ENCODE measurements at regions of chr17 and their contacts with region 1.

Region 1: GRCh38 chr17:44324571-44325275 is at the start of gene SLC25A39:
- DNase-seq: peak; percentile 99
- ATAC-seq: peak; percentile 74
- H3K4me3 Mint-ChIP-seq: peak within 1 kb of the TSS; percentile 91
- H3K27ac Mint-ChIP-seq: peak within 1 kb of the TSS; percentile 96
- H3K4me1 Mint-ChIP-seq: peaks cover 33% of the 10 kb centered on the region
- H3K27me3 Mint-ChIP-seq: no peaks in the 10 kb centered on the region
- CTCF ChIP-seq: no peak
- total RNA-seq, gene SLC25A39: 119 and 129 TPM in 2 replicates

Region 2: GRCh38 chr17:43917348-43918018 is 407.2 kb before region 1 on chr17:
- CTCF ChIA-PET with region 1: no interaction called
- POLR2A ChIA-PET with region 1: no interaction called
- intact Hi-C with region 1: no loop called
- DNase-seq: peak; percentile 49
- ATAC-seq: peak; percentile 72
- H3K4me3 Mint-ChIP-seq: peak overlapping the region; percentile 84
- H3K27ac Mint-ChIP-seq: peak overlapping the region; percentile 21
- H3K4me1 Mint-ChIP-seq: peaks cover 15% of the 10 kb centered on the region
- H3K27me3 Mint-ChIP-seq: no peaks in the 10 kb centered on the region
- CTCF ChIP-seq: no peak

Region 3: DNA sequence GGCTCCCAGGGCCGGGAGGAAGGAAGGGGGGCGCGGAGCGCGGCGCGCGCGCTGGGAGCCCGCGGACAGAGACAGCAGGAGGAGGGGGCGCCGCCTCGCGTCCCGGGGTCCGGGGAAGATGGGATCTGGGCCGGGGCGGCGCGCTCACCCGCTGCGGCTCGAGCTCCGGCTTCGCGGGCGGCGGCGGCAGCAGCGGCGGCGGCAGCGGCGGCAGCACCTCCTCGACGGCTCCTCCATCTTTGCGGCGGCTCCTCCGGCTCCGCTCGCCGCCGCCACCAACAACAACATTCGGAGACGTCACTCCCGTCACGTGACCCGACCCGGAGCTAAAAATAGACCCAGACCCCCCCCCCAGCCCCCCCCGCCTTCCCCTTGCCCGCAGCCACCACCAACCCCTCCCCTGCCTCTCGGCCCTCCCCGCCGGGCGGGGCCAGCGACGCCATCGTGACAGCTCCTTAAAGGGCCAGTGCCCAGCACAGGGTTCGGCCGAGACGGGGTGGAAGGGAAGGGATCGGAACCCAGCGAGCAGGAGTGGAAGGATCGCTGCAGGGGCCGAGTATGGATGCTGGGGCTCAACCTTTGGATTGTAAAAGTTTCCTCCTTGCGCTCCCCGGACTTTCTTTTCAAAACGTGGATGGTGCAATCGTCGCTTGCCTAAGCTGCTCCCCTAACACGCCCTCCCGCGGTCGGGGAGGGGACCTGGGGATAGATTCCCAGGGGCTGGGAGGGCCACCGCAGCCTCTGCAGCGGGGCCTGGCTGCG is 201.2 kb before region 1 on chr17 and contains the start of gene HDAC5:
- CTCF ChIA-PET with region 1: no interaction called
- POLR2A ChIA-PET with region 1: interaction called, 7 read pairs
- intact Hi-C with region 1: loop called (anchors 5 kb)
- DNase-seq: peak; percentile 95
- ATAC-seq: peak; percentile 96
- H3K4me3 Mint-ChIP-seq: peak within 1 kb of the TSS; percentile 95
- H3K27ac Mint-ChIP-seq: peak within 1 kb of the TSS; percentile 97
- H3K4me1 Mint-ChIP-seq: peaks cover 49% of the 10 kb centered on the region
- H3K27me3 Mint-ChIP-seq: no peaks in the 10 kb centered on the region
- CTCF ChIP-seq: no peak
- total RNA-seq, gene HDAC5: 28.4 and 35.1 TPM in 2 replicates

Region 4: DNA sequence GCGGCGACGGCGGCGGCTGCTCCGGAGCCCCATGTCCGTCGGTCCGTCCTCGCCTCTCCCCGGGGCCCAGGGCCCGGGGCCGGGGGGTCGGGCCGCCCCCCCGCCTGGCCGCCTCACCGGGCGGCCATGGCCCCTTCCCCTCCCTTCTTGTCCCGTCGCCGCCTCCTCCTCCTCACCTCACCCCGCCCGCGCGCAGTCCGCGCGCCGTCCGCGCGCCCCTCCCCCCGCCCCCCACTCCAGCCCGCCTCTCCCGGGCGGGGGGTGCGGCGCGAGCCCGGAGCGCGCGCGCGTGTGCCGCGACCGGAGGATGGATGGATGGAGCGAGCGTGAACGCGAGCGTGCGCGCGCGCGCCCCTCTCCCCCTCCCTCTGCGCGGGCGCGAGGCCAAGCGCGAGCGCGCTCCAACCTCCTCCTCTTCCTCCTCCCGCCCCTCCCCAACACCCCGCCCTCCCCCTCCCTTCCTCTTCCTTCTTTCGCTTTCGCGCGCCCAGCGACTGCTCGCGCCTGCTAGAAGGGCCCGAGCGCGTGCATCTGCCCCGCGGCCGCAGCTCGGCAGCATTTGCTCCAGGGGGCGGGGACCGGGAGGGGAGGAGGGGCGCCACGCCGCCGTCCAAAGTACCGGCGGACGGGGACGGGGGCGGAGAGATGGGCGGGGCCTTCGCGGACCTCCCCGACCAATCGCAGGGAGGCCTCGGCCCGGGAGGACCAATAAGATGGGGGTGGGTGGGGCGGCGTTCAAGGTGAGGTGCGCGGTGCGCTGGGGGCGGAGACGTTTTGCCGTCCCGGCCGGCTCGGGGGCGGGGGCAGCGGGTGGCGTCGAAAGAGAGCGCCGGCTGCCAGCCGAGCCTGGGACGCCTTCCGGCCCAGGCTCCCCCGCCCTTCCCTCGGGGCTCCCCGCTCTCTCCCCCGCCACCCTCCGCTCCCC is 124.9 kb before region 1 on chr17 and contains the start of gene ATXN7L3:
- CTCF ChIA-PET with region 1: no interaction called
- POLR2A ChIA-PET with region 1: interaction called, 14 read pairs
- intact Hi-C with region 1: loop called (anchors 1 kb)
- DNase-seq: peak; percentile 95
- ATAC-seq: peak; percentile 85
- H3K4me3 Mint-ChIP-seq: peak within 1 kb of the TSS; percentile 91
- H3K27ac Mint-ChIP-seq: peak within 1 kb of the TSS; percentile 92
- H3K4me1 Mint-ChIP-seq: peaks cover 39% of the 10 kb centered on the region
- H3K27me3 Mint-ChIP-seq: no peaks in the 10 kb centered on the region
- CTCF ChIP-seq: no peak
- total RNA-seq, gene ATXN7L3: 92.0 and 103 TPM in 2 replicates

Region 5: GRCh38 chr17:44269535-44270240 is 55.0 kb before region 1 on chr17:
- CTCF ChIA-PET with region 1: no interaction called
- POLR2A ChIA-PET with region 1: interaction called, 10 read pairs
- intact Hi-C with region 1: no loop called
- DNase-seq: no peak
- ATAC-seq: no peak
- H3K4me3 Mint-ChIP-seq: no peak overlapping the region
- H3K27ac Mint-ChIP-seq: no peak overlapping the region
- H3K4me1 Mint-ChIP-seq: no peaks in the 10 kb centered on the region
- H3K27me3 Mint-ChIP-seq: peaks cover 16% of the 10 kb centered on the region
- CTCF ChIP-seq: no peak

Region 6: DNA sequence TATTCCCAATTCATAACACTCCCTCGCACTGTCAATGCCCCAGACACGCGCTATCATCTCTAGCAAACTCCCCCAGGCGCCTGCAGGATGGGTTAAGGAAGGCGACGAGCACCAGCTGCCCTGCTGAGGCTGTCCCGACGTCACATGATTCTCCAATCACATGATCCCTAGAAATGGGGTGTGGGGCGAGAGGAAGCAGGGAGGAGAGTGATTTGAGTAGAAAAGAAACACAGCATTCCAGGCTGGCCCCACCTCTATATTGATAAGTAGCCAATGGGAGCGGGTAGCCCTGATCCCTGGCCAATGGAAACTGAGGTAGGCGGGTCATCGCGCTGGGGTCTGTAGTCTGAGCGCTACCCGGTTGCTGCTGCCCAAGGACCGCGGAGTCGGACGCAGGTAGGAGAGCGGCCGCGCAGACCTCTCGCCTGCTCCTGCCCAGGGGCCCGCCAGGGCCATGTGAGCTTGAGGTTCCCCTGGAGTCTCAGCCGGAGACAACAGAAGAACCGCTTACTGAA is 20.3 kb after region 1 on chr17 and contains the start of gene GRN:
- CTCF ChIA-PET with region 1: interaction called, 38 read pairs
- POLR2A ChIA-PET with region 1: interaction called, 32 read pairs
- intact Hi-C with region 1: loop called (anchors 1 kb)
- DNase-seq: peak; percentile 76
- ATAC-seq: peak; percentile 70
- H3K4me3 Mint-ChIP-seq: peak within 1 kb of the TSS; percentile 97
- H3K27ac Mint-ChIP-seq: peak within 1 kb of the TSS; percentile 89
- H3K4me1 Mint-ChIP-seq: peaks cover 58% of the 10 kb centered on the region
- H3K27me3 Mint-ChIP-seq: no peaks in the 10 kb centered on the region
- CTCF ChIP-seq: no peak
- total RNA-seq, gene GRN: 229 and 250 TPM in 2 replicates

Region 7: GRCh38 chr17:44556832-44557606 is 232.3 kb after region 1 on chr17 and contains the start of gene FZD2:
- CTCF ChIA-PET with region 1: no interaction called
- POLR2A ChIA-PET with region 1: no interaction called
- intact Hi-C with region 1: loop called (anchors 5 kb)
- DNase-seq: peak; percentile 64
- ATAC-seq: peak; percentile 84
- H3K4me3 Mint-ChIP-seq: peak within 1 kb of the TSS; percentile 95
- H3K27ac Mint-ChIP-seq: peak within 1 kb of the TSS; percentile 90
- H3K4me1 Mint-ChIP-seq: peaks cover 26% of the 10 kb centered on the region
- H3K27me3 Mint-ChIP-seq: peaks cover 25% of the 10 kb centered on the region
- CTCF ChIP-seq: no peak
- total RNA-seq, gene FZD2: 0.91 TPM in 2 replicates

Region 8: DNA sequence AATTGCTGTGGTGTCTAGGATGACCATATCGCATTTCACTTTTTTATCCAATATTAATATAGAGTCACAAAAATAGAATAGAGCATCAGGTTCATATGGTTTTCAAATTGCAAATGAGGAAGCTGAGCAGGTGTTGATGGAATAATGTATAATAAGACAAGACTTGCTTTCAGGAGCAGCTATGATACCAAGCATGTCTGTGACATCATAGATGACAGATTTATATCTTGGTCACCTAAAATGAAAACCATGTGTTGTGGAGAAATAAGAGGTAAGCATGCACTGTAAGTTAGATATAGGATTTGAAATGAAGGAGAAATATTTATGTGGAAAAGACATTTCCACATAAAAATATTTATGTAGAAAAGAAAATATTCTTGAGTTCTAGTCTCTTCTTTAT is 340.1 kb after region 1 on chr17:
- CTCF ChIA-PET with region 1: no interaction called
- POLR2A ChIA-PET with region 1: no interaction called
- intact Hi-C with region 1: no loop called
- DNase-seq: no peak
- ATAC-seq: no peak
- H3K4me3 Mint-ChIP-seq: no peak overlapping the region
- H3K27ac Mint-ChIP-seq: no peak overlapping the region
- H3K4me1 Mint-ChIP-seq: no peaks in the 10 kb centered on the region
- H3K27me3 Mint-ChIP-seq: peaks cover 2% of the 10 kb centered on the region
- CTCF ChIP-seq: no peak